Dorsolateral prefrontal cortex (tissue), 120 donors: ENCODE measurements at regions of chr3 and their contacts with region 1.

Region 1: DNA sequence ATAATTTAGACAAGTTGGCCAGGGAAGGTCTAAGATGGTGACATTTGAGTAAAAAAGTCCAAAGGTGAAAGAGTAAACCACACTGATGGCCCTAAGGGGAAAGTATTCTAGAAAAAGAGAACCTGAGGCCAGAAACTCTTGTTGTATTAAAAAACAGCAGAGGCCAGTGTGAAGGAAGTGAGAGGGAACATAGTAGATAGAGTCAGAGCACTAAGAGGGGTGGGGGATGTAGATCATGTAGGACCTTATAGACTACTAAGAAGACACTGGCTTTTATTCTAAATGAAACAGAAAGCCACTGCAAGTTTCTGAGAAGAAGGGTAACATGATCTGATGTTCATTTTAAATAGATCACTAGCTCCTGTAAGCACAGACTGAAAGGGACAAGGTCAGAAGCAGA is 14.5 kb downstream of the POLQ start:
- DNase-seq: no peak
- H3K4me3 ChIP-seq: no peak overlapping the region
- H3K27ac ChIP-seq: no peak overlapping the region
- H3K27me3 ChIP-seq: no peaks in the 10 kb centered on the region
- CTCF ChIP-seq: no peak

Region 2: GRCh38 chr3:121562158-121562557 is 30.9 kb after region 1 on chr3:
- intact Hi-C with region 1: loop called in 1 of 2 experiments (anchors 2 kb)
- DNase-seq: no peak
- H3K4me3 ChIP-seq: no peak overlapping the region
- H3K27ac ChIP-seq: no peak overlapping the region
- H3K27me3 ChIP-seq: no peaks in the 10 kb centered on the region
- CTCF ChIP-seq: no peak

Region 3: DNA sequence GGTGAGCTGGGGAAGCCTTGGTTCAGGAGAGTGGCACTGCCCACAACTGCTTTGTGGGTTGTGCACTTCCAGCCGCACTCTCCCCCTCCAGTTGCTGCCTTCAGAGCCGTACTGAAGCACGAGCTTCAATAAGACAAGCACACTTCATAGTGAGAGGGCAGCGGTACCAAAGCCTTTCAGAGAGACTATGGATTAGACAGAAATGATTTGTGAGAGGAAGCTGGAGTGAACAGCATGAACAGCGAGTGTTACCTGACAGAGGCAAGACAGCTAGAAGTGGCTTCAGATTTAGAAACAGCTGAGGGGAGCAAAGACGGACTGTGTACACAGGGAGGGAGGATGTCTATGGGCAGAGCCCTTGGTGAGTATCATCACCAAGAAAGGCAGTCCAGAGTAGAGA is 98.3 kb after region 1 on chr3:
- intact Hi-C with region 1: no loop called
- DNase-seq: no peak
- H3K4me3 ChIP-seq: no peak overlapping the region
- H3K27ac ChIP-seq: no peak overlapping the region
- H3K27me3 ChIP-seq: no peaks in the 10 kb centered on the region
- CTCF ChIP-seq: no peak